BJ (cell line): ENCODE measurements at regions of chr18 and their contacts with region 1.

Region 1: GRCh38 chr18:24362758-24363157 is 34.9 kb downstream of the OSBPL1A start:
- DNase-seq: no peak
- H3K4me3 ChIP-seq: no peak overlapping the region
- H3K27me3 ChIP-seq: no peaks in the 10 kb centered on the region
- CTCF ChIP-seq: no peak

Region 2: DNA sequence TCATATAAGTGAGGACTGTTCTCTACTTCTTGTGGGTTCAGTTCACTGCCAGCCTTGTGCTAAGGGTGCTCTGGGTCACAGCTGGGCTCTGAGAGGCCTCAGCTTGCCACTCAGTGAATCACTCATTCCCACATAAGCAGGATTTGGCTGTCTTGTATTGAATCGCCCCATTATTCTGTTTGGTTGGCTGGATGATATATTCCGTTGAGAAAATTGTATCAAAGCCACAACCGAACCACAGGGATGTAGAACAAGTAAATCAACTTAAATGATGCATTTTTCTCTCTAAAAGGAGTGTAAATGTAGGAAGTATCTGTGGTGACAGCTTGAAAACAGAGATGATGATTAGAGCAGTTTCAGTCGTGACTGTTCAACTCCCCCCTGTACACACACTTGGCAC is 308.6 kb before region 1 on chr18:
- CTCF ChIA-PET with region 1: no interaction called
- POLR2A ChIA-PET with region 1: no interaction called
- DNase-seq: no peak
- H3K4me3 ChIP-seq: no peak overlapping the region
- H3K27me3 ChIP-seq: no peaks in the 10 kb centered on the region
- CTCF ChIP-seq: no peak

Region 3: DNA sequence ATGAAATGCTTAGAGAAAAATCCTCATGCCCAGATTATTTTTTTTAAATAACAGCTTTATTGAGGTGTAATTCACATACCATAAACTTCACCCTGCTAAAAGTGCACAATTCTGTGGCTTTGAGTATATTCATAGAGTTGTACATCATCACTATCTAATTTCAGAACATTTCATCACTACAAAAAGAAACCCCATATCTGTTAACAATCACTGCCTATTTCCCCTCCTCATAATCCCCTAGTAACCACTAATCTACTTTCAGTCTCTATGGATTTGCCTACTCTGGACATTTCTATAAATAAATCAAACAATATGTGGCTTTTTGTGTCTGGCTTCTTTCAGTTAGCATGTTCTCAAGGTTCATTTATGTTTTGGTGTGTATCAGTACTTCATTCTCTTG is 16.5 kb before region 1 on chr18:
- CTCF ChIA-PET with region 1: interaction called, 16 read pairs
- POLR2A ChIA-PET with region 1: no interaction called
- DNase-seq: no peak
- H3K4me3 ChIP-seq: no peak overlapping the region
- H3K27me3 ChIP-seq: no peaks in the 10 kb centered on the region
- CTCF ChIP-seq: no peak

Region 4: GRCh38 chr18:24502644-24503523 is 140.1 kb after region 1 on chr18:
- CTCF ChIA-PET with region 1: no interaction called
- POLR2A ChIA-PET with region 1: no interaction called
- DNase-seq: no peak
- H3K4me3 ChIP-seq: no peak overlapping the region
- H3K27me3 ChIP-seq: no peaks in the 10 kb centered on the region
- CTCF ChIP-seq: no peak